Naive thymus-derived CD4-positive, alpha-beta T cell (primary cell): ENCODE measurements at regions of chr13 and their contacts with region 1.

Region 1: DNA sequence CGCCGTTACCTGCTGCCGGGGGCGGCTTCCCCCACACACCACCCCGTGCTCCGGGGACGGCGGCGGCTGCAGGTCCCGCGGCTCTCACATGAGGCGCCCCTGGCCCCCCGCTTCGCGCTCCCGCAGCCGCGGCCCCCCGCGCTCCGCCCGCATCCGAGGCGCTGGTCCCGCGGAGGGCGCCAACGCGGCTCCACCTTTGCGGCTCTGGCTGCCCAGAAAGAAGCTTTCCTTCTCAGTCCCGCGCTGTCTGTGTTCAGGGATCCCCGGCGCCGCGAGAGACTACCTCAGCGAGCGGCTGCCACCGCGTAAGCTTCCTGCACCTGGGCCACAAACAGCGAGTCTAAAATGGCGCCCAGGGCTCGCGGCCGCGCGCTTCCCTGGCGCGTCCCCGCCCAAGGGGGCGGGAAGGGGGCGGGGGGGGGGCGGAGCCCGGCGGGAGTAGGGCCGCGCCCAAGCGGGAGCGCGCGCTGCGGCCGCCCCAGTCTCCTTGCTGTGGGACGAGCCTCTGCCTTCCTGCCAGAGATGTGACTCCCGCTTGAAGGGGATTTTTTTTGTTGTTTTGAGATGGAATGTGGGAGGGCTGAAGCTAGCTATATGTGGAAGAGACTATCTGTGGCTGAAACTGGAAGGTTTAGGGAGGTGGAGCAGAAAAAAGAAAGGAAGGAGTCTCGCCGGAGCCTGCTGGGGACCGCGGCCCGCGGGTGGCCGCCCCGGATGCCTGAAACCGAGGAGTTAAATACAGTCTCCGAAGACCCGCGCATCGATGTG is at the start of gene FBXL3:
- DNase-seq: peak; percentile 77 to 88 (median 84)
- ATAC-seq: peak; percentile 90
- H3K4me3 ChIP-seq: peak within 1 kb of the TSS; percentile 87
- H3K4me3 Mint-ChIP-seq: peak within 1 kb of the TSS; percentile 93 to 100 (median 98)
- H3K27ac ChIP-seq: peak within 1 kb of the TSS; percentile 100
- H3K27ac Mint-ChIP-seq: peak within 1 kb of the TSS; percentile 92 to 99 (median 94)
- H3K4me1 ChIP-seq: peaks cover 30 to 35% of the 10 kb centered on the region in 2 donors
- H3K4me1 Mint-ChIP-seq: peaks cover 36 to 61% (median 51%) of the 10 kb centered on the region in 7 donors
- H3K27me3 ChIP-seq: no peaks in the 10 kb centered on the region
- H3K27me3 Mint-ChIP-seq: peaks cover 0 to 6% (median 3%) of the 10 kb centered on the region in 5 donors
- total RNA-seq, gene FBXL3: 44.2 to 94.2 (median 70.8) TPM

Region 2: DNA sequence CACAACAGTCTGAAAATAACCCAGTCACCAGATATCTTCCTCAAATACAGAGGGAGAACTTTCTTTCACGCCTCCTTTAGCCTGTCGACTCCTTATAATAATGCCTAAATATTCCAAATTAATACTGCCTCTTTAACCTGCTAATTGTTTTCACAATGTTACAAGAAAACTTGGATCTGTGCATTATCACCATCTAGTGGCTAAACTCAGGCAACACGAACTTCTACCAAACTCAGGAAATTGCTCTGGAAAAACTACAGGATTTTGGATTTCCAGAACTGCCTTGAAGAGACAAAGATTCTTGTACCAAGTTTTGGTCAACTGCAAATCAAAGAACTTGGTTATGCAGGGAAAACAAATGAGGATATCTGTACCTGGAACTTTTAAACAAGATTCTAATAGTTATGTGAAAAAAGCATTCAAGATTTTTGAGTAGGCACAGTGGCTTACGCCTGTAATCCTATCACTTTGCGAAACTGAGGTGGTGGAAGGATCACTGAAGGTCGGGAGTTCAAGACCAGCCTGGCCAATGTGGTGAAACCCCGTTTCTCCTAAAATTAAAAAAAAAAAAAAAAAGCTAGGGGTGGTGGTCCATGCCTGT is 24.3 kb before region 1 on chr13:
- CTCF ChIA-PET with region 1: interaction called, 4 read pairs
- POLR2A ChIA-PET with region 1: interaction called, 170 read pairs
- intact Hi-C with region 1: loop called (anchors 1 to 2 kb)
- DNase-seq: no peak
- ATAC-seq: no peak
- H3K4me3 ChIP-seq: no peak overlapping the region
- H3K4me3 Mint-ChIP-seq: peak overlapping the region in 1 of 10 donors; percentile 2
- H3K27ac ChIP-seq: peak overlapping the region; percentile 17
- H3K27ac Mint-ChIP-seq: peak overlapping the region in 6 of 9 donors; percentile 3 to 84 (median 70)
- H3K4me1 ChIP-seq: no peaks in the 10 kb centered on the region
- H3K4me1 Mint-ChIP-seq: peaks cover 7 to 68% (median 55%) of the 10 kb centered on the region in 7 donors
- H3K27me3 ChIP-seq: no peaks in the 10 kb centered on the region
- H3K27me3 Mint-ChIP-seq: no peaks in the 10 kb centered on the region

Region 3: DNA sequence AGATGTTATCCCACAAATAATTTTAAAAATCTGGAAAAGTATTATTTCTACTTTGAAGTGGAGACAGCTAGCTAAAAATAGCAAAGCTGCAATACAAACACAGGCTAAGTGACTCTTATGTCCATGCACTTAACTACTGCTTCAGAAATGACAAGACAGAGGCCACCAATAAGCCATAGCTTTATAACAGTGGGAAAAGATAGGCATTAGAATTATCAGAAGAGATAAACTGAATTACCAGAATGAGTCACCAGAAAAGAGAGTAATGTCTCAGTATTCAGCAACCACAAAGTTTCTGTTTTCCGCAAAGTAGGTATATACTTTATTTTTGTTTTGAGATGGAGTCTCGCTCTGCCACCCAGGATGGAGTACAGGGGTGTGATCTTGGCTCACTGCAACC is 18.0 kb before region 1 on chr13:
- CTCF ChIA-PET with region 1: no interaction called
- POLR2A ChIA-PET with region 1: interaction called, 16 read pairs
- intact Hi-C with region 1: loop called (anchors 1 to 2 kb)
- DNase-seq: no peak
- ATAC-seq: no peak
- H3K4me3 ChIP-seq: no peak overlapping the region
- H3K4me3 Mint-ChIP-seq: no peak overlapping the region
- H3K27ac ChIP-seq: no peak overlapping the region
- H3K27ac Mint-ChIP-seq: peak overlapping the region in 7 of 9 donors; percentile 6 to 70 (median 55)
- H3K4me1 ChIP-seq: peaks cover 3 to 6% of the 10 kb centered on the region in 2 donors
- H3K4me1 Mint-ChIP-seq: peaks cover 5 to 63% (median 51%) of the 10 kb centered on the region in 7 donors
- H3K27me3 ChIP-seq: no peaks in the 10 kb centered on the region
- H3K27me3 Mint-ChIP-seq: no peaks in the 10 kb centered on the region

Region 4: GRCh38 chr13:77056382-77056781 is 29.4 kb after region 1 on chr13:
- CTCF ChIA-PET with region 1: no interaction called
- POLR2A ChIA-PET with region 1: interaction called, 3 read pairs
- intact Hi-C with region 1: loop called in 1 of 2 experiments (anchors 2 kb)
- DNase-seq: no peak
- ATAC-seq: no peak
- H3K4me3 ChIP-seq: no peak overlapping the region
- H3K4me3 Mint-ChIP-seq: no peak overlapping the region
- H3K27ac ChIP-seq: no peak overlapping the region
- H3K27ac Mint-ChIP-seq: peak overlapping the region in 4 of 9 donors; percentile 10 to 77 (median 24)
- H3K4me1 ChIP-seq: no peaks in the 10 kb centered on the region
- H3K4me1 Mint-ChIP-seq: no peaks in the 10 kb centered on the region
- H3K27me3 ChIP-seq: no peaks in the 10 kb centered on the region
- H3K27me3 Mint-ChIP-seq: no peaks in the 10 kb centered on the region

Region 5: GRCh38 chr13:77274126-77274525 is 247.1 kb after region 1 on chr13:
- CTCF ChIA-PET with region 1: no interaction called
- POLR2A ChIA-PET with region 1: no interaction called
- intact Hi-C with region 1: no loop called
- DNase-seq: peak in 1 of 9 donors; percentile 6
- ATAC-seq: no peak
- H3K4me3 ChIP-seq: no peak overlapping the region
- H3K4me3 Mint-ChIP-seq: no peak overlapping the region
- H3K27ac ChIP-seq: no peak overlapping the region
- H3K27ac Mint-ChIP-seq: peak overlapping the region in 2 of 9 donors; percentile 19 to 73
- H3K4me1 ChIP-seq: no peaks in the 10 kb centered on the region
- H3K4me1 Mint-ChIP-seq: peaks cover 0 to 36% (median 18%) of the 10 kb centered on the region in 7 donors
- H3K27me3 ChIP-seq: no peaks in the 10 kb centered on the region
- H3K27me3 Mint-ChIP-seq: no peaks in the 10 kb centered on the region